Activated naive CD4-positive, alpha-beta T cell treated with anti-CD3 and anti-CD28 coated beads for 36 hours (primary cell): ENCODE measurements at regions of chr22 and their contacts with region 1.

Region 1: GRCh38 chr22:36180038-36180880 is 19.7 kb upstream of the APOL3 start:
- DNase-seq: peak; percentile 93
- H3K4me3 Mint-ChIP-seq: no peak overlapping the region
- H3K27ac Mint-ChIP-seq: no peak overlapping the region
- H3K4me1 Mint-ChIP-seq: peaks cover 7% of the 10 kb centered on the region
- H3K27me3 Mint-ChIP-seq: no peaks in the 10 kb centered on the region

Region 2: GRCh38 chr22:35930933-35931332 is 249.3 kb before region 1 on chr22:
- CTCF ChIA-PET with region 1: no interaction called
- intact Hi-C with region 1: loop called (anchors 1 kb)
- DNase-seq: no peak
- H3K4me3 Mint-ChIP-seq: no peak overlapping the region
- H3K27ac Mint-ChIP-seq: no peak overlapping the region
- H3K4me1 Mint-ChIP-seq: no peaks in the 10 kb centered on the region
- H3K27me3 Mint-ChIP-seq: no peaks in the 10 kb centered on the region

Region 3: DNA sequence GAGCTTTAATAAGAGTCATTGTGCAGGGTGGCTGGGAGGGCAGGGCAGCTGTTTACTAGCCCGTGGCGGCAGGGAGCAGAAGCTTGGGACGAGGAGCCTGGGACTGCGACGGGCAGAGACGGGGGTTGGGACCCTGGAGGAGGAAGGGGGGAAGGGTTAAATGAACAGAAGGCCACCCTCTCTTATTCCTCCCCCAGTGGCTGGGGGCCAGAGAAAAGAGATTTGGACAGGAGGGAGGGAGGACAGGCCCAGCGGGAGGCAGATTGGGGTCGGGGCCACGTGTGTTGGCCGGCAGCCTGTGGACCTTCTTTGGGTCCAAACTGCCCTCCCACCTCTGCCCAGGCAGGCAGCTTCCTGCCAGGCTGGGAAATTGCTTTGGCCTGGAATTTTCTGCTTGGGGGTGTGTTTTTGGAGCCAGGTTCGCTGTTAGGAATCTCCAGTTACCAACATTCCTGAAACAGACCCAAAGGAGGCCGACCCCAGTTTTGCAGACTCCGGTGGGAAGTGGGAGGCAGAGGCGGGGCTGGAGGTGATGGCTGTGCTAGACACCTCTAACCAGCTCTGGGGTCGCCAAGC is 69.9 kb before region 1 on chr22:
- CTCF ChIA-PET with region 1: no interaction called
- intact Hi-C with region 1: no loop called
- DNase-seq: no peak
- H3K4me3 Mint-ChIP-seq: no peak overlapping the region
- H3K27ac Mint-ChIP-seq: no peak overlapping the region
- H3K4me1 Mint-ChIP-seq: no peaks in the 10 kb centered on the region
- H3K27me3 Mint-ChIP-seq: no peaks in the 10 kb centered on the region

Region 4: DNA sequence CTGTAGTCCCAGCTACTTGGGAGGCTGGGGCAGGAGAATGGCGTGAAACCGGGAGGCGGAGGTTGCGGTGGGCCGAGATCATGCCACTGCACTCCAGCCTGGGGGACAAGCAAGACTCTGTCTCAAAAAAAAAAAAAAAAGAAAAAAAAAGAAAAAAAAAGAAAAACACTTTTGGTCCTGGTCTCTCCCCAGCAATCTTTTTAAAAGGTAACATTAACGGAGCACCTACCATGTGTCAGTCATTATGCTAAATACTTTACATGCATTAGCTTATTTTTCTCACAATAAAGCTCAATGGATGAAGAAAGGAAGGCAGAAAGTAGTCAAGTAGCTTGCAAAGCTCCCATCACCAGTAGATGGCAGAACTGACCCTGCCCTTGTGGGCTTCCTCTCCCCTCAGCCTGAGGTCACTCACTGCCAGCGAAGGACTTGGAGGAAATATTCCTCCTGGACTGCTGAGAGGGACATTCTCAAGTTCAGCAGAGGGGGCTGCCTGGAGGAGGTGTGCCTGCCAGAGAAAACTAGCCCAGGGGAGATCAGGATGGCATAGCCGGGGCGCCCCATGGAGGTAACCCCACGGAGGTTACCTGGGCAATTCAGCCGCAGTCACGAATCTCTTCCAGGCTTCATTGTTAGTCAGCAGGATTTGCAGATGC is 35.2 kb before region 1 on chr22:
- CTCF ChIA-PET with region 1: interaction called, 35 read pairs
- intact Hi-C with region 1: loop called (anchors 1 kb)
- DNase-seq: peak; percentile 63
- H3K4me3 Mint-ChIP-seq: no peak overlapping the region
- H3K27ac Mint-ChIP-seq: no peak overlapping the region
- H3K4me1 Mint-ChIP-seq: peaks cover 19% of the 10 kb centered on the region
- H3K27me3 Mint-ChIP-seq: no peaks in the 10 kb centered on the region

Region 5: DNA sequence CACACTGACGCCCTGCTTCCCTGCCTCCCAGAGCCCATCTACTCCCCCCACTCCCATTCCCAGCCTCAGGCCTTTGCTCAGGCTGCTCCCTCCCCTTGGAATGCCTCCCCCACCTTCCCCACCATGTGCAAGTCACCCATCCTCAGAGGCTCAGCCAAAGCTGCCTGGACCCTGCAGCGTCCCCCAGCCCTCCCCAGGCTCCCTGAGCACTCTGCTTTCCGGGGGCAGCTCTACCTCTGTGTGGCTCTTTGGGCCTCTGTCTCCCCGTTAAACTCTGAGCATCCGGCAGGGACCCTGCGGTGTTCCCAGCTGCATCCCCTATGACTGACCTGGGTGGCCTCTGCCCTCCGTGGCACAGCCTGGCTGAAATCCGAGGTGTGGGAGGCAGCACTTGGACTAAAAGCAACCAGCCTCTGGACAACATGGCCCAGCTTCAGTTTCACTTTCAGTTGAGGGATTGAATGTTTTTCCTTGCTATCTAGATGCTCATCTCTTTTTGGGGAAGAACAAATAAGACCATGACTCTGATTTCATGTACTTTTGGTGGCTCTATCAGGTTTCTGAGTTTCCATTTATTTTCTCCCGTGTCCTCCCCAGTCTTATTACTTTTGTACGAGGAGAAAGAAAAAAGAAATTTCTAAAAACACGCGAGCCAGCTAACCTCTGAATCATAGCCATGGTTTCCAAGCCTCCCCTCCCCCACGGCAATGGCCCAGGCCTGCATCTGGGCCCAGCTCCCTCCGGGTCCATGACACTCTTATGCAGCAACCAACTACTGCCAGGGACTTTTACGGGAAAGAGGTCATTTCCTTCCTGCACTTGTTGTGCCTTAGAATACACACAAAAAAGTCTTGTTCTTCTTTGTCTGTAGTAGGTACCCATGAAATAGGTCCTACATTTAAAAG is 23.5 kb before region 1 on chr22:
- CTCF ChIA-PET with region 1: interaction called, 49 read pairs
- intact Hi-C with region 1: no loop called
- DNase-seq: peak; percentile 92
- H3K4me3 Mint-ChIP-seq: peak overlapping the region; percentile 92
- H3K27ac Mint-ChIP-seq: peak overlapping the region; percentile 99
- H3K4me1 Mint-ChIP-seq: peaks cover 88% of the 10 kb centered on the region
- H3K27me3 Mint-ChIP-seq: no peaks in the 10 kb centered on the region